Aorta (tissue), 5 donors: ENCODE measurements at regions of chr2 and their contacts with region 1.

Region 1: GRCh38 chr2:165698444-165698894 is 95.6 kb downstream of the GALNT3 start:
- DNase-seq: no peak
- ATAC-seq: no peak
- H3K4me3 ChIP-seq: no peak overlapping the region
- H3K27ac ChIP-seq: no peak overlapping the region
- H3K4me1 ChIP-seq: peaks cover 0 to 2% of the 10 kb centered on the region in 2 donors
- H3K27me3 ChIP-seq: no peaks in the 10 kb centered on the region

Region 2: GRCh38 chr2:164671664-164672396 is 1026.6 kb before region 1 on chr2:
- intact Hi-C with region 1: no loop called
- DNase-seq: no peak
- ATAC-seq: peak; percentile 64
- H3K4me3 ChIP-seq: no peak overlapping the region
- H3K27ac ChIP-seq: no peak overlapping the region
- H3K4me1 ChIP-seq: peaks cover 0 to 3% of the 10 kb centered on the region in 2 donors
- H3K27me3 ChIP-seq: no peaks in the 10 kb centered on the region

Region 3: DNA sequence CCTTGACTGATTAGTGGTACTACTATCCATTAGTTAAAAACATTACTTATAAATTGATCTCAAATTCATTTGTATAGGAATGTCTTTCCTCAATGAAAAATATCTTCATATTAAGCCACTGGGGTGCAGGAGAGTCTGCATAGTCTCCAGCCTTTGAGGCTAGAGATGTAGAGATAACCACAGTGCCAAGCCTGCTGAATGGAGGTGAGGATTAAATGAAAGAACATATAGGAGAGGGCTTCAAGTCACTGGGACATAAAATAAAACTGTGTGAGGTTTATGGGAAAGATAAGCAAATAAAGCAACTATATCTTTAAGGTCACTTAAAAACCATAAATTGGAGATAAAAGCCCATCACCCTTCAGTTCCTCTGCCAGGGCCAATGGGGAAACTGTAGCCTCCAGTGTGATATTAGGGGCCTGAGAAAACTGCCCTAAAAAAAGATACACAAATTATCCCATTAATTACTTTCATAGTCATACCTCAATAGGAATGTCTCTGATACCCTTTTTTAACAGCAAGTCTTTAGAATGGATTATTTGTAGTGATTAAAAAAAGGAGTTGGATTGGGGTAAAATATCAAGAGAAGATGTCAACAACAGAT is 68.0 kb after region 1 on chr2:
- intact Hi-C with region 1: no loop called
- DNase-seq: no peak
- ATAC-seq: no peak
- H3K4me3 ChIP-seq: no peak overlapping the region
- H3K27ac ChIP-seq: no peak overlapping the region
- H3K4me1 ChIP-seq: no peaks in the 10 kb centered on the region
- H3K27me3 ChIP-seq: no peaks in the 10 kb centered on the region

Region 4: GRCh38 chr2:165874445-165875039 is 176.1 kb after region 1 on chr2:
- intact Hi-C with region 1: loop called in 1 of 2 experiments (anchors 10 kb)
- DNase-seq: no peak
- ATAC-seq: no peak
- H3K4me3 ChIP-seq: no peak overlapping the region
- H3K27ac ChIP-seq: no peak overlapping the region
- H3K4me1 ChIP-seq: no peaks in the 10 kb centered on the region
- H3K27me3 ChIP-seq: no peaks in the 10 kb centered on the region